GM12878 (cell line): ENCODE measurements at regions of chr3 and their contacts with region 1.

Region 1: DNA sequence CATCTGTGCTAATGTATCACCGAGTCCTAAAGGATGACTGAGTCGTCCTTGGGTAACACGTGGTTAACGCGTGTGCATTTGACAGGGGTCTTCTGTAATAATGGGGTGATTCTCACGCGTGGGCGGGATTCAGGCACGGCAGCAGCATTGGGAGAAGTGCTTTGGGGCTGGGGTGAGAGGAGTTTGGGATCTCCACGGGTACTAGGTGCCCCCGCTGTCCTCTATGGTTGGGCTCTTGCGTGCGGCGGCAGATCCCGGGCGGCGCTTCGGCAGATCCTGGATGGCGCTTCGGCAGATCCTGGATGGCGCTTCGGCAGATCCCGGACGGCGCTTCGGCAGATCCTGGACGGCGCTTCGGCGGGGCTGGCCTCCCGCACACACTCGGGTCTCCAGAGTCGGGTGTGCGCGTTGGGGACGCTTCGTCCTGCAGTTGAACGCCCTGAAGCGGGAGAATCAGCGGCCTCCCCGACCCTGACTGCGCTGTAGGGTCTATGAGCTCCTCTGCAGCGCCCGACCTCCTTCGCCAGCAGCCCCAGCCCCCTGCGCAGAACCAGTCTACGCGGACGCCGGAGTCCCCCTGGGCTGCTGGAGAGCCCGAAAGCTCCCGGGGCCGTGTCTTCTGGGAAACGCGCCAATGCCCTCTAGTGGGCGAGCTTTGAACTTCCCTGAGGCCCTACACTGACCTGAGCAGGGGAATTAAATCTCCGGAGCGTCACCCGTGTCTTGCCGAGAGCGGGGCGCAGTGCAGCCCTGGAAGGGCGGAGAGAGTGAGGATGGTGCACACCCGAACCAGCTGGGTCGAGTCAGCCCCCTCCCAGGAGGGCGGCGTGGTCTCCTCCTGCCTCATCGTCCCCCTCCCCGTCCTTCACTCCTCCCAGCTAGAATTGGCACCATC is 48.1 kb upstream of the EPHB3 start:
- DNase-seq: peak; percentile 7
- ATAC-seq: peak; percentile 100
- H3K4me3 ChIP-seq: no peak overlapping the region
- H3K27ac ChIP-seq: no peak overlapping the region
- H3K4me1 ChIP-seq: no peaks in the 10 kb centered on the region
- H3K27me3 ChIP-seq: peaks cover 2 to 12% of the 10 kb centered on the region in 2 experiments
- CTCF ChIP-seq: peak; percentile 86 to 90 (median 90)
- EP300 ChIP-seq: no peak
- POLR2A ChIP-seq: no peak
- RAD21 ChIP-seq: peak; percentile 78

Region 2: GRCh38 chr3:184354121-184354728 is 159.3 kb before region 1 on chr3:
- CTCF ChIA-PET with region 1: interaction called, 26 read pairs
- POLR2A ChIA-PET with region 1: no interaction called
- RAD21 ChIA-PET with region 1: interaction called, 9 read pairs
- SMC1A ChIA-PET with region 1: interaction called, 3 read pairs
- in situ Hi-C with region 1: no loop called
- intact Hi-C with region 1: loop called (anchors 1 kb)
- DNase-seq: no peak
- ATAC-seq: peak; percentile 94
- H3K4me3 ChIP-seq: no peak overlapping the region
- H3K27ac ChIP-seq: no peak overlapping the region
- H3K4me1 ChIP-seq: no peaks in the 10 kb centered on the region
- H3K27me3 ChIP-seq: no peaks in the 10 kb centered on the region; a peak in 1 of 4 replicates
- CTCF ChIP-seq: peak; percentile 78 to 91 (median 79)
- EP300 ChIP-seq: no peak
- POLR2A ChIP-seq: no peak
- RAD21 ChIP-seq: peak; percentile 61

Region 3: GRCh38 chr3:184371570-184372018 is 141.9 kb before region 1 on chr3:
- CTCF ChIA-PET with region 1: interaction called, 79 read pairs
- POLR2A ChIA-PET with region 1: no interaction called
- RAD21 ChIA-PET with region 1: interaction called, 28 read pairs
- SMC1A ChIA-PET with region 1: interaction called, 24 read pairs
- in situ Hi-C with region 1: no loop called
- intact Hi-C with region 1: loop called (anchors 1 kb)
- DNase-seq: no peak
- ATAC-seq: peak; percentile 99
- H3K4me3 ChIP-seq: no peak overlapping the region
- H3K27ac ChIP-seq: no peak overlapping the region
- H3K4me1 ChIP-seq: no peaks in the 10 kb centered on the region
- H3K27me3 ChIP-seq: peaks cover 0 to 6% of the 10 kb centered on the region in 2 experiments; a peak in 2 of 4 replicates
- CTCF ChIP-seq: peak; percentile 83 to 97 (median 97); a peak in 5 of 6 replicates
- EP300 ChIP-seq: no peak
- POLR2A ChIP-seq: no peak
- RAD21 ChIP-seq: peak; percentile 86

Region 4: DNA sequence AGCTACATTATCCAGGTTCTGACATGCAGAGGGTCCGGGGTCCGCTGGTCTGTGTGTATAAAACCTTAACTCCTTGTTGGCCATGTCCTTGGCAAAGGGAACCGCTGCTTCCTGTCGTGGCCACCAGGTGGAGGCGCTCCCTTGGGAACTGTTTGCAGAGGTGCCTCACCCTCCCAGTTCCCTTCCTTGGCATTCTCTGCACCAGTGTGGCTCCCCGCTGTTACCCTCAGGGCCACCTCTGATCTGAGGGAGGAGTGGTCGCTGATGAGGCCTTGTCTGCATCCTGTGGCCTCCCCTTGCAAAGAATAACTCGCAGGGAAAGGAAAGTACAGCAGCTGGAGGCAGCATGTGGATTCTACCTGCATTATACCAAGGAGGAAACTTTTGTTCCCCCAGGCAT is 44.1 kb before region 1 on chr3:
- CTCF ChIA-PET with region 1: interaction called, 7 read pairs
- POLR2A ChIA-PET with region 1: no interaction called
- RAD21 ChIA-PET with region 1: interaction called, 4 read pairs
- SMC1A ChIA-PET with region 1: interaction called, 4 read pairs
- in situ Hi-C with region 1: no loop called
- intact Hi-C with region 1: loop called (anchors 5 kb)
- DNase-seq: no peak
- ATAC-seq: peak; percentile 78
- H3K4me3 ChIP-seq: no peak overlapping the region
- H3K27ac ChIP-seq: no peak overlapping the region
- H3K4me1 ChIP-seq: no peaks in the 10 kb centered on the region
- H3K27me3 ChIP-seq: peaks cover 3 to 6% of the 10 kb centered on the region in 2 experiments; a peak in 3 of 4 replicates
- CTCF ChIP-seq: peak; percentile 40 to 59 (median 48)
- EP300 ChIP-seq: no peak
- POLR2A ChIP-seq: no peak
- RAD21 ChIP-seq: peak; percentile 31; the same call in 1 of the 2 replicates

Region 5: DNA sequence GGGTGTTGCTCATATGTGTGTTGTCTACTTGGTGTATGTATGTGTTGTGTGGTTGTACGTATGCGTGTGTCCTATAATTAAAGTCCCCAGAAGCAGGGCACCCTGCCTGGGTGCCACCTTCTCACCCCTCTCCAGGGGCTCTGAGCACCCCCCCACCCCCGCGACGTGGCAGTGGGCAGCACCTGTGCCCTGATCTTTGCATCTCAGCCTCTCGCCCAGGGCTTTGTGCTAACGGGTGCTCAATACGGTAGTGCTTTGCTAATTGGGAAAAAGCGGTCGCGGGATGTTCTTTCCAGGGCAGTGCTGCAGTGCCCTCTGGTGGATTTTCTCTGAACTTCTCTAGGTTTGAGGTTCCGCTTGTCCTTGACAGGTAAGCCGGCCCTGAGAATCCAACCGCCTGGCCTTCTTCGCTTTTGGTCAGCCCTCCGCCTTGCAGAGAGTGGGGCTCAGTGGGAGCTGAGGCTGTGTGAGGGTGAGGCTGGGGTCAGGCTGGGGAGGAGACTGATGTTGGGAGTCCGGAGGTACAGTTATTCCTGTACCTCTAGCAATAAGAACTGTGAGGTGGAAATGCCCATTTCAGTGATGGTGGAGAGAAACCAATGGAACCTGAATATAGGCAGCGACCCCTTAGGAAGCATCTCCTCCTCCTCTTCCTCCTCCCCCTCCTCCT is 30.5 kb after region 1 on chr3:
- CTCF ChIA-PET with region 1: interaction called, 23 read pairs
- POLR2A ChIA-PET with region 1: no interaction called
- RAD21 ChIA-PET with region 1: no interaction called
- SMC1A ChIA-PET with region 1: interaction called, 4 read pairs
- in situ Hi-C with region 1: no loop called
- intact Hi-C with region 1: no loop called
- DNase-seq: no peak
- ATAC-seq: peak; percentile 88
- H3K4me3 ChIP-seq: no peak overlapping the region
- H3K27ac ChIP-seq: no peak overlapping the region
- H3K4me1 ChIP-seq: no peaks in the 10 kb centered on the region
- H3K27me3 ChIP-seq: peaks cover 0 to under 1% of the 10 kb centered on the region in 2 experiments; a peak in 2 of 4 replicates
- CTCF ChIP-seq: peak; percentile 74 to 83 (median 81)
- EP300 ChIP-seq: no peak
- POLR2A ChIP-seq: no peak
- RAD21 ChIP-seq: peak; percentile 73

Region 6: DNA sequence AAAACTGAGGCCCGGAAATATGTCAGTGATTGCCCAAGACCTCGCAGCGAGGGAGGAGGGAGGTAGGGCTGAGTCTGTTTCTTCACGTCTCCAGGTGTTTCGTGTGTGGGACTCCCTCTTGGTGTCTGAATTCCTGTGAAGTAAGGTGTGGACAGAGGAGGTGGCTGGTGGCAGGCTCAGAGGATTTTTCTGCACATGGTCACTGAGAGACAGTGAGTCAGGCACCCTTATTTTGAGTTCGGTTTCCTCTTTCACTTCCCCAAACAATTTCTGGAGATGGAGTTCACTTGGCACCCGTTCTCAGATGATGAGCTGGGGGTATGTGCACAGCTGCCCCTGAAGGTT is 252.2 kb after region 1 on chr3:
- CTCF ChIA-PET with region 1: no interaction called
- POLR2A ChIA-PET with region 1: no interaction called
- RAD21 ChIA-PET with region 1: no interaction called
- SMC1A ChIA-PET with region 1: no interaction called
- in situ Hi-C with region 1: no loop called
- intact Hi-C with region 1: no loop called
- DNase-seq: peak; percentile 21
- ATAC-seq: peak; percentile 87
- H3K4me3 ChIP-seq: no peak overlapping the region
- H3K27ac ChIP-seq: no peak overlapping the region
- H3K4me1 ChIP-seq: peaks cover 10% of the 10 kb centered on the region; the same call in 1 of the 2 replicates
- H3K27me3 ChIP-seq: no peaks in the 10 kb centered on the region
- CTCF ChIP-seq: no peak
- EP300 ChIP-seq: no peak
- POLR2A ChIP-seq: no peak
- RAD21 ChIP-seq: no peak